ENCODE measurements at regions of chr7 and their contacts with region 1.

Region 1: DNA sequence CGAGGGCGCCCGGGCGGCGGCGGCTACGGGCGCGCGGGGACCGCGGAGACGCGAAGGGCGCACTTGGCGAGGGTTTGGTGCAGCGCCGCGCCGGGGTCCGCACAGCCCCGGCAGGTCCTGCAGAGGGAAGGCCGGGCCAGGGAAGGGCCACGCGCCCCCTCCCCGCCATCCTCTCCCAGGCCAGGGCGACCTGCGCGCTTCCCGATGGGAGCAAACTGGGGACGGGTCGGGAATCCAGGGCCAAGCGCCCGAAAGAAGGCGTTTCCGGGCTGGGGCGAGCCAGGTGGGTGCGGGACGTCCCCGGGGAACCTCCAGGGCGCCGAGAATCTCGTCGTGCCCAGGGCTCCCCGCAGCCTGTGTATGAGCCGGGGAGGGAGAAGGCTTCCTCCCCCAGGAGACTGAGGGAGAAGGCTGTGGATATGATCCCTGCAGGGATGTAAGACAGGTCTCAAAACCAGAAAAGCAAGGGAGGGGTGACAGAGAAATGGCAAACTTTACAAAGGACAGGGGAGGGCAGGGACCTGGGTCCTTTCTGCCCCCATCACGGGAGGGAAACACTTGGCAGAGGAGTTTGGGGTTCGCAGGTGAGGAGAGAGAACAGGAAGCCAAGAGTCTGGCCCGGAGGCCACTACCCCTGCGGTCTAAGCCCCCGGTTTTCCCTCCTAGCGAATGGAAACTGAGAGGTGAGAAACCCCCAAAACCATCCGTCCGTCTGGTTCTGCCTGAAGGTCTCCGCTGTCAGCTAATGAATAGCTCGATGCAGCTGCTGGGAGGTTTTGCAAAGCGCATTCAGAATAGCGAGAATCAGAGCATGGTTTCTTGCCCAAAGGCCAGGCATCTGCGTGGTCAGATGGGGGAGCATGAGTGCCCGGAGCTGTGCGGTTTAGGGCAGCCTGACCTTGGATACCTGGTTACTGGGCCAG is 668 bp downstream of the AMZ1 start:
- DNase-seq: peak; percentile 31
- H3K4me3 Mint-ChIP-seq: no peak overlapping the region
- H3K27ac Mint-ChIP-seq: no peak overlapping the region
- H3K4me1 Mint-ChIP-seq: peaks cover 8% of the 10 kb centered on the region
- H3K27me3 Mint-ChIP-seq: peaks cover 29% of the 10 kb centered on the region

Region 2: DNA sequence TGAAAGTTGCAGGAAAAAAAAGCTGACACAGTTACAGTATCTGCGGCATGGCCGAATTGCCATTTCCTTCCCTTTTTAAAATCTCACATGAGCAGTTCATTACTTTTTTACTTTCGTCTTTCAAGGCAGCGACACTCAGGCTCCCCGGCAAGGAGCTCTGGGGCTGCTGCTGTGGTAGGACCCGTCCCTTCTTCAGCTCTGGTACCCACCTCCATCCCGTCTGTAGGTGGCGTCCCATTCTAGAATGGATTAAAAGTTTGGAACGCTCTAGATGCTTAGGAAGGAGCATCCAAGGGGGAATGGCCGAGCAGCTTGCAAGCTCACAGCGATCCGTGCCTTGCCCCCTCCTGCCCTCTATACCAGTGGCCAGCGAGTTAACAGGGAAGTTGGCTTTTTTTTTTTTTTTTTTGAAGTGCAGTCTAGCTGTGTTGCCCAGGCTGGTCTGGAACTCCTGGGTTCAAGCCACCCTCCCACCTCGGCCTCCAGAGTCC is 79.7 kb before region 1 on chr7:
- CTCF ChIA-PET with region 1: no interaction called
- intact Hi-C with region 1: loop called (anchors 5 kb)
- DNase-seq: peak; percentile 54
- H3K4me3 Mint-ChIP-seq: no peak overlapping the region
- H3K27ac Mint-ChIP-seq: no peak overlapping the region
- H3K4me1 Mint-ChIP-seq: peaks cover 7% of the 10 kb centered on the region
- H3K27me3 Mint-ChIP-seq: no peaks in the 10 kb centered on the region

Region 3: DNA sequence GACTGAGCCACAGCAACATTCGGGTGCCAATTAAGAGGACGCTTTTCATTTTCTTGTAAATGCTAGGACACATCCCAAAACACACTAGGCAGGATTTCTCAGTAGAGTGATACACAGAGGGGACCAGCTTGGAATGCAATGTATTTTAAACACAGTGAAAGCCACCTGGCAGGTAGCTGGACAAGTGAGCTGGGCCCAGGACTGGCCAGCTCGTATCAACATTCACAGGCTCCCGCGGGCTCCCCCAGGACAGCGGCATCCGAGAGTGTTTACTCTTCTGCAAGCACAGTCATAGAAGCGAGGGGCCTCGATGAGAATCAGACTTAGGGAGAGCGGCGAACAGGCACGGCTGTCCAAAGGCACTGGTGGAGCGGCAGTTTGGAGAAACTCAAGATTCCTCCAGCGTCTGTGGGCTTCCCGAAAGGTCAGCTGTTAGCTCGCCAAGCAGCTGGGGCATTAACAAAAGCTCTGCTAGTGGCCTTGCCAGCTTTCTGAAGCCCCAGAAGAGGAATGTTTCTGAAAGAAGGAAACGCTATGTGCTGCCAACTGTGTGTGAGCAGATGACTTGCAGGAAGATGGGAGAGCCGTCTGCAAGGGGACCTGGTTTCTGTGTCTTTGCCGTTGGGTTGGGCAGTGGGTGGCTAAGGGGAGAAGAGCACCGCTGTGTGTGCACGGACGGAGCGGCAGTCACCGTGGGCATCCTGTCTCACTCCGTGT is 41.2 kb after region 1 on chr7:
- CTCF ChIA-PET with region 1: no interaction called
- intact Hi-C with region 1: no loop called
- DNase-seq: no peak
- H3K4me3 Mint-ChIP-seq: no peak overlapping the region
- H3K27ac Mint-ChIP-seq: no peak overlapping the region
- H3K4me1 Mint-ChIP-seq: peaks cover 14% of the 10 kb centered on the region
- H3K27me3 Mint-ChIP-seq: no peaks in the 10 kb centered on the region